ENCODE measurements at regions of chr9 and their contacts with region 1.

Region 1: DNA sequence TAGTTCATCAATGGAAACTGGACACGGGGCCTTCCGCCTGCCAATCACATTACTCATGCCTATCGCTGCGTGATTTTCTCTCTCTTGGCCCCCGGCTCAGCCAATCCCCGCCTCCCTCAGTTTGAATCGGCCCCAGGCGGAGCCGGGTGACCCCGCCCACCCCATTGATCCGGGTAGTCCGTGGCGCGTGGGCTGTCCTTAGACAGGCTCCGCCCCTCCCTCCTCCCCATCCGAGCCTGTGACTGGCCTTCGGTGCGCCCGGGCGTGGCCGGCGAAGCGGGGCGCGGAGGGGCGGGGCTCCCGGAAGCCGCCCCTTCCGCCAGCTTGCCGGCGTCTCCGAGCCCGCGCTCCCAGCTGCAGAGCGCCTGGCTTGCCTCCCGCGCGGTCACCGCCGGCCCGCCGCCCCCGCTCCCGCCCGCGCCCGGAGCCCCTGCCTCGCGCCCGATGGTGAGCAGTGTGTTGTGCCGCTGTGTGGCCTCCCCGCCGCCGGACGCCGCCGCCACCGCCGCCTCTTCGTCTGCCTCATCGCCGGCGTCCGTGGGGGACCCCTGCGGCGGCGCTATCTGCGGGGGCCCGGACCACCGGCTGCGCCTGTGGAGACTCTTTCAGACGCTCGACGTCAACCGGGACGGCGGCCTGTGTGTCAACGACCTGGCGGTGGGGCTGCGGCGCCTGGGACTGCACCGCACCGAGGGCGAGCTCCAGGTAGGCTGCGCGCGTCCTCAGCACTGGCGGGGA is at the start of gene SLC25A25:
- DNase-seq: peak; percentile 100
- ATAC-seq: peak; percentile 84
- H3K4me3 Mint-ChIP-seq: no peak within 1 kb of the TSS
- H3K27ac Mint-ChIP-seq: peak within 1 kb of the TSS; percentile 90
- H3K4me1 Mint-ChIP-seq: peaks cover 53% of the 10 kb centered on the region
- H3K27me3 Mint-ChIP-seq: no peaks in the 10 kb centered on the region
- total RNA-seq, gene SLC25A25: 6.9 to 10.8 TPM

Region 2: GRCh38 chr9:127568971-127569885 is 498.8 kb before region 1 on chr9:
- CTCF ChIA-PET with region 1: no interaction called
- POLR2A ChIA-PET with region 1: no interaction called
- intact Hi-C with region 1: loop called in 1 of 2 experiments (anchors 2 kb)
- DNase-seq: peak; percentile 88
- ATAC-seq: peak; percentile 85
- H3K4me3 Mint-ChIP-seq: peak overlapping the region; percentile 71
- H3K27ac Mint-ChIP-seq: peak overlapping the region; percentile 38
- H3K4me1 Mint-ChIP-seq: peaks cover 26% of the 10 kb centered on the region
- H3K27me3 Mint-ChIP-seq: no peaks in the 10 kb centered on the region

Region 3: GRCh38 chr9:127802576-127803443 is 265.2 kb before region 1 on chr9 and contains the start of gene FPGS:
- CTCF ChIA-PET with region 1: no interaction called
- POLR2A ChIA-PET with region 1: no interaction called
- intact Hi-C with region 1: loop called in 1 of 2 experiments (anchors 1 kb)
- DNase-seq: peak; percentile 93
- ATAC-seq: peak; percentile 86
- H3K4me3 Mint-ChIP-seq: peak within 1 kb of the TSS; percentile 98
- H3K27ac Mint-ChIP-seq: peak within 1 kb of the TSS; percentile 95
- H3K4me1 Mint-ChIP-seq: peaks cover 26% of the 10 kb centered on the region
- H3K27me3 Mint-ChIP-seq: no peaks in the 10 kb centered on the region
- total RNA-seq, gene FPGS: 71.9 to 80.4 TPM

Region 4: GRCh38 chr9:127980706-127981558 is 87.1 kb before region 1 on chr9 and contains the start of gene EEIG1:
- CTCF ChIA-PET with region 1: interaction called, 11 read pairs
- POLR2A ChIA-PET with region 1: interaction called, 4 read pairs
- intact Hi-C with region 1: loop called in 1 of 2 experiments (anchors 1 kb)
- DNase-seq: peak; percentile 99
- ATAC-seq: peak; percentile 87
- H3K4me3 Mint-ChIP-seq: peak within 1 kb of the TSS; percentile 97
- H3K27ac Mint-ChIP-seq: peak within 1 kb of the TSS; percentile 98
- H3K4me1 Mint-ChIP-seq: peaks cover 47% of the 10 kb centered on the region
- H3K27me3 Mint-ChIP-seq: no peaks in the 10 kb centered on the region
- total RNA-seq, gene EEIG1: 56.2 to 58.4 TPM

Region 5: GRCh38 chr9:128159784-128160602 is 91.9 kb after region 1 on chr9 and contains the start of gene BBLN:
- CTCF ChIA-PET with region 1: no interaction called
- POLR2A ChIA-PET with region 1: no interaction called
- intact Hi-C with region 1: loop called in 1 of 2 experiments (anchors 1 kb)
- DNase-seq: peak; percentile 98
- ATAC-seq: peak; percentile 91
- H3K4me3 Mint-ChIP-seq: peak within 1 kb of the TSS; percentile 74
- H3K27ac Mint-ChIP-seq: peak within 1 kb of the TSS; percentile 90
- H3K4me1 Mint-ChIP-seq: peaks cover 19% of the 10 kb centered on the region
- H3K27me3 Mint-ChIP-seq: no peaks in the 10 kb centered on the region
- total RNA-seq, gene BBLN: 64.4 to 68.5 TPM

Region 6: DNA sequence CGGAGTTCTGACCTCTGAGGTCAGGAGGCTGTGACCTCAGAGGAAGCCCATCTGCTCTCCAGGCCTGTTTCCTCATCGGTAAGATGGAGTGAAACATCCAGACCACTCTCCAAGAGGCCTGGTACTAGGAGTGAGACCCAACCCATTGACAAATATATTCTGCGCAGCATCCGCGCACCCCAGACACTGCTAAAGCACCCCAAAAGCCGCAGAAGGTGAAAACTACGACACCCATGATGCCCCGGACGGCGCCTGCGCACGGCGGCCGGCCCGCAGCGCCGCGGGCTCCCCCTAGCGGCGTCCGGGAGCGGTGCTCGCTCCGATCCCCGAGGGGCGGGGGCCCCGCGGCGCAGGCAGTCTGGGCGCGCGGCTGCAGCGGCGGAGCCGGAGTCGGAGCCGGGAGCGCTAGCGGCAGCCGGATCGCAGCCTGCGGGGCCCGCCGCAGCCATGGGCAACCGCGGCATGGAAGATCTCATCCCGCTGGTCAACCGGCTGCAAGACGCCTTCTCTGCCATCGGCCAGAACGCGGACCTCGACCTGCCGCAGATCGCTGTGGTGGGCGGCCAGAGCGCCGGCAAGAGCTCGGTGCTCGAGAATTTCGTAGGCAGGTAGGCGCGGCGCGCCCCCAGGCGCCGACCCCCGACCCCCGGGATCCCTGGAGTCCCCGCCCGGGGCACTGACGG is 135.1 kb after region 1 on chr9 and contains the start of gene DNM1:
- CTCF ChIA-PET with region 1: no interaction called
- POLR2A ChIA-PET with region 1: no interaction called
- intact Hi-C with region 1: no loop called
- DNase-seq: peak; percentile 83
- ATAC-seq: peak; percentile 95
- H3K4me3 Mint-ChIP-seq: peak within 1 kb of the TSS; percentile 39
- H3K27ac Mint-ChIP-seq: peak within 1 kb of the TSS; percentile 66
- H3K4me1 Mint-ChIP-seq: peaks cover 12% of the 10 kb centered on the region
- H3K27me3 Mint-ChIP-seq: peaks cover 11% of the 10 kb centered on the region
- total RNA-seq, gene DNM1: 0.50 to 0.72 TPM

Region 7: DNA sequence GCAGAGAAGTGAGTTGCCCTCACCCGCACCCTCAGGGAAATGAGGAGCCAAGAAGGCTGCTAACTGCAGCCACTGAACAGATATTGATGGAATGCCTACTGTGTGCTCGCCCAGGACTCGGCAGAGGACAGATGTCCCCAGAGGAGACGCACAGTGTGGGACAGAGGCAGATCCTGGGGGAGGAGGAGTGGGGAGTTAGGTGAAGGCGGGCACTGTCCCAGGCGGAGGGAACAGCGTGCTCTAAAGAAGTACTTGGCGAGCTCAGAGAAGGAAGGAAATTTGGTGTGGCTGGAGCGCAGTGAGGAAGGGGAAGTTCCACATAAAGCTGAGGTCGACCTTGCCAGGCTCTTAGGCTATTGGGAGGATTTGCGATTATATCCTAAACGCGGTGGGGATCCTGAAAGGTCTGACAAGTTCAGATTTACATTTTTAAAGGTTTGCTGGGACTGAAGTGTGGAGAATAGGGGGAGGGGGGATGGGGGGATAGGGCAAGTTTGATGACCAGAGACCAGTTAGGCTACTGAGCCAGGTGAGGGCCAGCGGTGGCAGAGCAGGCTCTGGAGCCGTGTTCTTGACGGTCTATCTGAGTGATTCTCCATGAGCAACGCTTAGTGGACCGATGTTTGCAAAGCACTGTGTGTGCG is 329.0 kb after region 1 on chr9:
- CTCF ChIA-PET with region 1: no interaction called
- POLR2A ChIA-PET with region 1: no interaction called
- intact Hi-C with region 1: no loop called
- DNase-seq: no peak
- ATAC-seq: no peak
- H3K4me3 Mint-ChIP-seq: no peak overlapping the region
- H3K27ac Mint-ChIP-seq: no peak overlapping the region
- H3K4me1 Mint-ChIP-seq: no peaks in the 10 kb centered on the region
- H3K27me3 Mint-ChIP-seq: peaks cover 10% of the 10 kb centered on the region

Region 8: GRCh38 chr9:128552153-128552743 is 484.2 kb after region 1 on chr9 and contains the start of gene SPTAN1:
- CTCF ChIA-PET with region 1: no interaction called
- POLR2A ChIA-PET with region 1: no interaction called
- intact Hi-C with region 1: loop called in 1 of 2 experiments (anchors 5 kb)
- DNase-seq: peak; percentile 98
- ATAC-seq: peak; percentile 78
- H3K4me3 Mint-ChIP-seq: no peak within 1 kb of the TSS
- H3K27ac Mint-ChIP-seq: peak within 1 kb of the TSS; percentile 97
- H3K4me1 Mint-ChIP-seq: peaks cover 34% of the 10 kb centered on the region
- H3K27me3 Mint-ChIP-seq: no peaks in the 10 kb centered on the region
- total RNA-seq, gene SPTAN1: 192 to 269 TPM

Measured in activated CD4-positive, alpha-beta T cell treated with anti-CD3 and anti-CD28 coated beads for 36 hours (primary cell).